GM12878 (cell line): ENCODE measurements at regions of chrX and their contacts with region 1.

Region 1: DNA sequence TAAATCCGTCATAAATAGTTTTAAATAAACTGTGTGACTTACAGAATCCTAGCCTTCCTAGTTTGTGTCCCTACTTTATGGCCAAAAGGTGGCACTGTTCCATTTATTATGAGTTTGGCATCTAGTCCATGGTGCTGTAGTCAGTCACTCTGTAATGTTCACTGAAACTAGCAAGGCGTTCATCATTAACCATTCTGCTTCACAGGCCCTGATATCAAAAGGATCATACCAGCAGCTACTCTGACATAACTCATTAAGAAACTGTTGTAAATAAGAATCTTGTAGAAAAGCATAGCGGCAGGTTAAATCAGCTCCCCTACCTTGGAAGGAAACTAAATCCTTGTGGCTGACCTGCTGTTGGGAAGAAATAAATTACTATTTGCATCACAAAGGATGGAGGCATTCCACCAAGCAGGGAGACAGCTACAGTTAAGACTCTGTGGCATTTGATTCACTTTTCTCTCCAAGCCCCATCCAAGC is 919.6 kb upstream of the DIAPH2 start:
- DNase-seq: no peak
- ATAC-seq: peak; percentile 80
- H3K4me3 ChIP-seq: no peak overlapping the region
- H3K27ac ChIP-seq: no peak overlapping the region
- H3K4me1 ChIP-seq: no peaks in the 10 kb centered on the region
- H3K27me3 ChIP-seq: no peaks in the 10 kb centered on the region
- CTCF ChIP-seq: peak; percentile 44 to 51 (median 44); a peak in 5 of 6 replicates
- EP300 ChIP-seq: no peak
- POLR2A ChIP-seq: no peak
- RAD21 ChIP-seq: peak; percentile 56

Region 2: DNA sequence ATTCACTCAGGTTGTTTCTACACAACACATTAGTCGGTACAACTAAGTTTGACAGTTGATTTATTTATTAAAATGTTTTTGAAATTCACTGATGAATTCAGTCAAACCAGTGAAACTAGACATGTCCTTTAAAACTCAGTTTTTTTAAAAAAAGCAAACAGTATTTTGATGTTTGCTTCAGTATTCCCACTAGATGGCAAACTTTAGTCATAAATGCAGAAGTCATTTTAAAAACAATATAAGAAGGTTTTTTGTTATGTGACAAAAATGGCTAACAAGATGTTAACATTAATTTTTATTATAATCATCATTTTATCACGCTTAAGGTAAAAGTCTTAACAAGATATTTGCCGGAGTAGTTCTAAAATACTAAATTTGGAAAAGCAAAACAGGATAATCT is 418.2 kb before region 1 on chrX:
- CTCF ChIA-PET with region 1: no interaction called
- POLR2A ChIA-PET with region 1: no interaction called
- RAD21 ChIA-PET with region 1: no interaction called
- SMC1A ChIA-PET with region 1: no interaction called
- in situ Hi-C with region 1: no loop called
- intact Hi-C with region 1: loop called (anchors 5 kb)
- DNase-seq: no peak
- ATAC-seq: no peak
- H3K4me3 ChIP-seq: no peak overlapping the region
- H3K27ac ChIP-seq: no peak overlapping the region
- H3K4me1 ChIP-seq: no peaks in the 10 kb centered on the region
- H3K27me3 ChIP-seq: no peaks in the 10 kb centered on the region
- CTCF ChIP-seq: peak in 1 of 3 experiments; percentile 13; a peak in 2 of 6 replicates
- EP300 ChIP-seq: no peak
- POLR2A ChIP-seq: no peak
- RAD21 ChIP-seq: peak; percentile 41